BJ (cell line): ENCODE measurements at regions of chr5 and their contacts with region 1.

Region 1: DNA sequence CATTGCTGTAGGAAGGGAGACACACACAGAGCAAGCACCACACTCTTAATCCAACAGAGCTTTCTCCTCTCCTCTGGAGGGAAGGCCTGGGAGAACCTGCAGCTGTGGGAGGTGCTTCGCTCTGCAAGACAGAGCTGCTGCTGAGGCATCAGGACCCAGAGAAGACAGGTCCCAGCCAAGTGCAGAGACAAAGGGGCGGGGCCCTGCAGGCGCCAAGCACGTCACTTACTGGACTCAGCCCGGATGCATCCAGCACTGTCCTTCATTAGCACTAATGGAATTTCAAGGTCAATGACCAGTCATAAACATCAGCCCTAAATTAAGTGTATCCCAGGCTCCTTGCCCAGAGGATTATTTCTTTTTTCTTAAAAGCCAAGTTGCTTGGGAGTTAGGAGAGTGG is 337.1 kb upstream of the PANK3 start:
- DNase-seq: no peak
- H3K4me3 ChIP-seq: no peak overlapping the region
- H3K27me3 ChIP-seq: no peaks in the 10 kb centered on the region; the same call in 1 of the 2 replicates
- CTCF ChIP-seq: no peak

Region 2: GRCh38 chr5:168898247-168898911 is 17.9 kb before region 1 on chr5:
- CTCF ChIA-PET with region 1: no interaction called
- POLR2A ChIA-PET with region 1: no interaction called
- DNase-seq: no peak
- H3K4me3 ChIP-seq: no peak overlapping the region
- H3K27me3 ChIP-seq: no peaks in the 10 kb centered on the region
- CTCF ChIP-seq: no peak

Region 3: GRCh38 chr5:169347786-169348185 is 431.5 kb after region 1 on chr5:
- CTCF ChIA-PET with region 1: no interaction called
- POLR2A ChIA-PET with region 1: interaction called, 15 read pairs
- DNase-seq: peak; percentile 65
- H3K4me3 ChIP-seq: no peak overlapping the region
- H3K27me3 ChIP-seq: no peaks in the 10 kb centered on the region
- CTCF ChIP-seq: no peak